HepG2 (cell line): ENCODE measurements at regions of chr7 and their contacts with region 1.

Region 1: GRCh38 chr7:149799397-149800171 is 26.2 kb upstream of the ZNF467 start:
- DNase-seq: peak; percentile 35
- ATAC-seq: peak; percentile 63
- H3K4me3 ChIP-seq: no peak overlapping the region
- H3K27ac ChIP-seq: no peak overlapping the region
- H3K4me1 ChIP-seq: no peaks in the 10 kb centered on the region
- H3K27me3 ChIP-seq: 0 out of 5 replicates have a peak, but pooled peaks cover 0 to 2% of the 10 kb centered on the region in 2 experiments
- CTCF ChIP-seq: peak; percentile 91
- EP300 ChIP-seq: no peak
- POLR2A ChIP-seq: no peak
- RAD21 ChIP-seq: no peak

Region 2: GRCh38 chr7:149753401-149754233 is 46.0 kb before region 1 on chr7:
- CTCF ChIA-PET with region 1: no interaction called
- POLR2A ChIA-PET with region 1: no interaction called
- in situ Hi-C with region 1: no loop called
- intact Hi-C with region 1: loop called (anchors 1 kb)
- DNase-seq: peak; percentile 35
- ATAC-seq: peak; percentile 89
- H3K4me3 ChIP-seq: no peak overlapping the region
- H3K27ac ChIP-seq: no peak overlapping the region
- H3K4me1 ChIP-seq: peaks cover 1% of the 10 kb centered on the region; the same call in 1 of the 2 replicates
- H3K27me3 ChIP-seq: peaks cover 2 to 10% of the 10 kb centered on the region in 2 experiments; a peak in 2 of 5 replicates
- CTCF ChIP-seq: peak; percentile 81
- EP300 ChIP-seq: no peak
- POLR2A ChIP-seq: no peak
- RAD21 ChIP-seq: 0 out of 2 replicates have a peak, but pooled peaks have one; percentile 8

Region 3: DNA sequence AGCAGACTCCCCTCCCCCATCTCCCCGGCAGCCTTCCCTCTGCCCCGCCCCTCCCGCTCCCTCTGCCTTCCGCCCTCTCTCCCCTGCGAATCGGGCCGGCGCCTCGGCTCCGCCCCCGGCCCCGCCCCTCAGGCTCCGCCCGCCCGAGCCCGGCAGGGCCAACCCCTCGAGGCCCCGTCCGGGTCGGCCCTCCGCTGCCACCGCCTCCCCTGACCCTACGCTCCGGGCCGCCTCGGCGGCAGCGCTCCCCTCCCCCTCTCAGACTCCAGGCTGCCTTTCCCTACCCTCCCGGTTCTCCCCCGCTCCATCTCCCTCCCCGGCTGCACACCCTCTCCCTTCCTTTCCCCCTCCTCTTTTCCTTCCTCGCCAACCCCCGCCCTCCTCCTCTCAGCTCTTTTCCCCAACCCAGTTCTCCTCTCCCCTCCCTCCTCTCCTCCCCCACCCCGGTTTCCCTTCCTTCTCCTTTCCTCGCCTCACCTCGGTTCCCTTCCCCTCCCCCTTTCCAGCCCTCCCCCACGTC is 27.8 kb before region 1 on chr7:
- CTCF ChIA-PET with region 1: no interaction called
- POLR2A ChIA-PET with region 1: no interaction called
- in situ Hi-C with region 1: no loop called
- intact Hi-C with region 1: no loop called
- DNase-seq: peak; percentile 61
- ATAC-seq: peak; percentile 89
- H3K4me3 ChIP-seq: peak overlapping the region; percentile 50 to 76 (median 69); a peak in 4 of 6 replicates
- H3K27ac ChIP-seq: no peak overlapping the region
- H3K4me1 ChIP-seq: peaks cover 9% of the 10 kb centered on the region
- H3K27me3 ChIP-seq: peaks cover 12 to 41% of the 10 kb centered on the region in 2 experiments; a peak in 4 of 5 replicates
- CTCF ChIP-seq: no peak
- EP300 ChIP-seq: no peak
- POLR2A ChIP-seq: no peak
- RAD21 ChIP-seq: no peak